ENCODE measurements at regions of chr10 and their contacts with region 1.

Region 1: DNA sequence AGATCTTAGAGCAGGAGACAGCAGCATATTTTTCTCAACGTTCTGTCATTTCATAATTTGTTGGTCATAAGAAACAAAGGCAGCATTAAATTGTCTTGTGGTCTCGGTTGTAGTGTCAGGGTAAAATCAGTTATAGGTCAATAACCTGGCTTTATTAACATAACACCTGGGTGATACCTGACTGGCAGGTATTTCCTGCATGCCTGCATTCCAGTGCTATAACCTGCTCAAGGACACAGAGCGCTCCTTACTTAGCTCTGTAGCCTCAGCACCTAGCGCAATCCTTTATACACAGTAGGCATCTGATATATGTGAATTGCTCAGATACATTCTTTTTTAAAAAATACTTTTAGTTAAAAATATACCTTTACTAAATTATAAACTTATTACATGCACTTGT is 38.9 kb upstream of the PRKG1 start:
- DNase-seq: no peak
- ATAC-seq: no peak
- H3K4me3 ChIP-seq: no peak overlapping the region
- H3K27ac ChIP-seq: no peak overlapping the region
- H3K4me1 ChIP-seq: no peaks in the 10 kb centered on the region
- H3K27me3 ChIP-seq: no peaks in the 10 kb centered on the region
- CTCF ChIP-seq: no peak
- EP300 ChIP-seq: no peak
- POLR2A ChIP-seq: no peak
- RAD21 ChIP-seq: no peak

Region 2: DNA sequence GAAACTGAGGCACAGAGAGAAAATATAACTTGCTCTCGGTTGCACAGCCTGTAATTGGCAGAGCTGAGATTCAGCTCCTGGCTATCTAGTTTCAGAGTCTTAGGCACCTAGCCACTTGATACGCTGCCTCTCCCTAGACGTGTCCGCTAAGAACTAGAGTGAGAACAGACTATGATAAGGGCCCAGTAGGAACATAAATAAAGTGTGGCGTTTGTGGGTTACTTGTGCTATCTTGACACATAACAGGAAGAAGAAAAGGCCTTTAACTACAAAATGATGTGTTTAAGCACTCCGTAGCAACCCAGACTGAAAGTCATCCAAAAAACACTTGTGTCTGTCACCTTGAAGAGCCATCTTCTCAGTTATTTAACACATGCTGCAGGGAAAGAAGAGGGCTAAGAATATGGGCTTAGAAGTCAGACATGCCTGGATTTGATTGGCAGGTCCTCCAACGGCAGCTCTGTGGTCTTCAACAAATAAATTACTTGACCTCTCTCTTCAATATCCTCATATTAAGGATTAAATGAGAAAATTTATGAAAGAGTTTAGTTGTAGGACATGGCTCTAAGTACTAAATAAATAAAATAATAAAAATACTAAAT is 507.8 kb before region 1 on chr10:
- CTCF ChIA-PET with region 1: no interaction called
- POLR2A ChIA-PET with region 1: no interaction called
- in situ Hi-C with region 1: no loop called
- intact Hi-C with region 1: no loop called
- DNase-seq: peak in 2 of 4 experiments; percentile 59 to 71
- ATAC-seq: peak; percentile 84
- H3K4me3 ChIP-seq: no peak overlapping the region
- H3K27ac ChIP-seq: peak overlapping the region; percentile 17; the same call in 1 of the 3 replicates
- H3K4me1 ChIP-seq: peaks cover 6 to 27% of the 10 kb centered on the region in 2 experiments
- H3K27me3 ChIP-seq: no peaks in the 10 kb centered on the region
- CTCF ChIP-seq: no peak
- EP300 ChIP-seq: no peak
- POLR2A ChIP-seq: no peak
- RAD21 ChIP-seq: peak; percentile 6 to 7; a peak in 1 of 4 replicates

Region 3: DNA sequence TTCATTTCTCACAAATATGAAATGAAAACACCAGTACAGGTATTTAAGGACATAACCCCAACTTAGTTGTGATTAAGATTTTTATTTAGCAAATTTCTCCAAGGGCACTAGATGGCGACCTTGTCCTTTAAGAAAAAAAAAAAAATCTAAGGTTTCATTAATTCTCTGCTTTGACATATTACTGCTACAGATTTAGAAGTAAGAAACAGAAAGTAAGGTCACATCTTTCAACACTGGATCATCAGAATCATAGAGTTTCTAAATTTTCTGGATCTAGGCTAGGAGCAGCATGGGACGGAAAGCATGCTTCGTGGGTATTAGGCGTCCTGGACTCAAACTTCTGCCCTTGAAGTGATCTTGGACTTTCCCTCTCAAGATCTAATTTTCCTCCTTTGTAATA is 46.5 kb before region 1 on chr10:
- CTCF ChIA-PET with region 1: no interaction called
- POLR2A ChIA-PET with region 1: no interaction called
- in situ Hi-C with region 1: no loop called
- intact Hi-C with region 1: loop called (anchors 2 kb)
- DNase-seq: peak in 1 of 4 experiments; percentile 17
- ATAC-seq: 0 out of 3 replicates have a peak, but pooled peaks have one; percentile 34
- H3K4me3 ChIP-seq: no peak overlapping the region
- H3K27ac ChIP-seq: no peak overlapping the region
- H3K4me1 ChIP-seq: peaks cover 0 to 8% of the 10 kb centered on the region in 2 experiments; a peak in 1 of 5 replicates
- H3K27me3 ChIP-seq: peaks cover 9 to 19% of the 10 kb centered on the region in 2 experiments; a peak in 4 of 5 replicates
- CTCF ChIP-seq: peak in 2 of 3 experiments; percentile 22 to 50; a peak in 3 of 6 replicates
- EP300 ChIP-seq: no peak
- POLR2A ChIP-seq: no peak
- RAD21 ChIP-seq: peak in 1 of 2 experiments; percentile 48; a peak in 3 of 4 replicates

Region 4: DNA sequence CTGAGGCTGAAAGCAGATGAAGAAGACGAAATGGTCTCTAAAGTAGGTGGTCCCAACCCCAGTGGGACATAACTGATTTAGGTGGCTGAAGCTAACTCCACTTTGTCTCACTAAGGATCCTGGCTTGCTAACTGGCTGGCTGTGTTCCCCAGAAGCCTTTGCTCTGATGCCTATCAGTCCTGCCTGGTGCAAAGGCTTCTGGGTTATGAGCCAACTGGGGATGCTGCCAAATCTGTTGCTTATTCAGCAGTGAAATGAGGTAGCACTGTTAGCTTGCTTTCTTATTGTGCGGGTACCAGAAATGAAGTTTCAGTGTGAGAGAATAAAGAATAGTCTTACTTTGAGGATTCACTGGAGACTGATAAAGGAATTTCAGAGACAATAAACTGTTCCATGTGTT is 57.1 kb after region 1 on chr10:
- CTCF ChIA-PET with region 1: no interaction called
- POLR2A ChIA-PET with region 1: no interaction called
- in situ Hi-C with region 1: no loop called
- intact Hi-C with region 1: no loop called
- DNase-seq: no peak
- ATAC-seq: no peak
- H3K4me3 ChIP-seq: no peak overlapping the region
- H3K27ac ChIP-seq: no peak overlapping the region
- H3K4me1 ChIP-seq: no peaks in the 10 kb centered on the region
- H3K27me3 ChIP-seq: no peaks in the 10 kb centered on the region
- CTCF ChIP-seq: no peak
- EP300 ChIP-seq: no peak
- POLR2A ChIP-seq: no peak
- RAD21 ChIP-seq: no peak